A549 (cell line): ENCODE measurements at regions of chr2 and their contacts with region 1.

Region 1: GRCh38 chr2:233443468-233444183 is 89.3 kb downstream of the DGKD start:
- DNase-seq: peak; percentile 88
- ATAC-seq: peak; percentile 55 to 61; a peak in 5 of 6 replicates
- H3K4me3 ChIP-seq: no peak overlapping the region
- H3K27ac ChIP-seq: peak overlapping the region; percentile 84 to 94
- H3K4me1 ChIP-seq: peaks cover 63% of the 10 kb centered on the region
- CTCF ChIP-seq: peak; percentile 89
- EP300 ChIP-seq: no peak
- POLR2A ChIP-seq: no peak
- RAD21 ChIP-seq: peak; percentile 92 to 95

Region 2: GRCh38 chr2:233178994-233179847 is 264.4 kb before region 1 on chr2:
- CTCF ChIA-PET with region 1: no interaction called
- POLR2A ChIA-PET with region 1: no interaction called
- DNase-seq: no peak
- ATAC-seq: peak; percentile 40 to 48; a peak in 4 of 6 replicates
- H3K4me3 ChIP-seq: no peak overlapping the region
- H3K27ac ChIP-seq: 0 out of 6 replicates have a peak overlapping the region, but pooled peaks of 1 of the 2 experiments have one; percentile 14
- H3K4me1 ChIP-seq: no peaks in the 10 kb centered on the region
- CTCF ChIP-seq: no peak
- EP300 ChIP-seq: no peak
- POLR2A ChIP-seq: no peak
- RAD21 ChIP-seq: no peak

Region 3: DNA sequence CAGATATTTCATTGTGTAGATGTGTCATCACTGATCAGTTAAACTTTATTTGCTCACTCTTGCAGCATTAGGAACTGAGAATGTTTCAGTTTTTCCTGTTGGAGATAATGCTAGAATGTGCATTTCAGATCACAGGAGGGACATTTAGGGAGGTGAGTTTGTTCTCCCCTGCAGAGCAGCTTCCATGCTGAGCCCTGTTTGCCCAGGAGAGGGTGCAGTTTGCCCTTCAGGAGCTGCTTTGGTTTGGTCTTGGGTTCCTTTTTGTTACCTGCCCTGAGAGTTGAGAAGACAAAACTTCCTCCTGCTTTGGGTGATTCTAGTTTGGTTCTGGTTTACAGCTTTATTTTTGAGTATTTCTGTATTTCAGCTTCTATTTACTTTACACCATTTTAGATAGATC is 39.4 kb before region 1 on chr2:
- CTCF ChIA-PET with region 1: interaction called, 166 read pairs
- POLR2A ChIA-PET with region 1: no interaction called
- DNase-seq: peak; percentile 60 to 77
- ATAC-seq: peak; percentile 45 to 71; a peak in 3 of 6 replicates
- H3K4me3 ChIP-seq: no peak overlapping the region
- H3K27ac ChIP-seq: peak overlapping the region; percentile 64 to 82
- H3K4me1 ChIP-seq: peaks cover 74% of the 10 kb centered on the region
- CTCF ChIP-seq: peak; percentile 76
- EP300 ChIP-seq: no peak
- POLR2A ChIP-seq: no peak
- RAD21 ChIP-seq: peak; percentile 80 to 88

Region 4: DNA sequence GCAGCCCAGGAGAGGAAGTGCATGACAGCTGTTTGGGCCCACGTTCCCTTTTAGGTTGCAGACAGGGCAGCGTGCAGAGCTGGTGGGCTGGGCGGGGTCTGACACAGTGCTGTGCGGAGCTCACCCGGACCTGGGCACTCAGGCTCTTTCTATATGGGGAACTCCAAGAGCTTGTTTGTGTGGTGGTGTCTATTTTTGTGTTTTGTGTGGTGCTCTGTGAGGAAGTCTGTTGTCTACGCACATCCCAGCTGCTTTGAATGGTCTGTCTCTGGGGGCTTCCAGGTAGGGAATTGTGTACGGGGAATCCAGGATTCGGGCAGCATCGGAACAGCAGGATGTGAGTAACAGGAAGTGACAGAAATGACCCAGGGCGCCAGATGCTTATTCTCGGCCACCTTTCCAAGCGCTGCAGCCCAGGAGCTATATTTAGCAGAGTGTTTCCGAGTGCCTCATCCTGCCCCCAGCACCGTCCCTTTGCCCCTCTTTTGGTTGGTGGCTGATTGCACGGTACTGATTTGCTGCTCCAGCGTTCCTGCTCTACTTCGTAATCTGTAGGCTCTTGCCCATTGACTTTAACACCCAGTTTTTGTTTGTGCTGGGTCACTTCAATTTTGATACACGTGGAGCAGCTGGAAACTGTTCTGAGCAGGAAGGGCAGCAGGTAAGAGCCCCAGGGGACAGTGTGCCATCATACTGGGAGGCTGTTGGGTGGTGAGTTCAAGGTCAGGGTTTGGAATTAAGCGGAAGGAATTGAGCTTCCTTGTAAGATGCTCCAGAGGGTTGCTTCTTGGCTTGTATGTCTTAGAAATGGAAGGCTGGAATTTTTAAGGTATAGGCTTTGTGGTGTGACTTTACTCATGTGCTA is 24.6 kb before region 1 on chr2:
- CTCF ChIA-PET with region 1: interaction called, 356 read pairs
- POLR2A ChIA-PET with region 1: interaction called, 3 read pairs
- DNase-seq: peak; percentile 47 to 81
- ATAC-seq: peak; percentile 32 to 47; a peak in 5 of 6 replicates
- H3K4me3 ChIP-seq: peak overlapping the region; percentile 47
- H3K27ac ChIP-seq: peak overlapping the region; percentile 95 to 99
- H3K4me1 ChIP-seq: peaks cover 100% of the 10 kb centered on the region
- CTCF ChIP-seq: no peak
- EP300 ChIP-seq: peak in 1 of 2 experiments; percentile 19; a peak in 1 of 5 replicates
- POLR2A ChIP-seq: peak; percentile 22; the same call in 1 of the 2 replicates
- RAD21 ChIP-seq: no peak

Region 5: GRCh38 chr2:233455006-233455405 is 11.4 kb after region 1 on chr2:
- CTCF ChIA-PET with region 1: interaction called, 22 read pairs
- POLR2A ChIA-PET with region 1: no interaction called
- DNase-seq: no peak
- ATAC-seq: no peak
- H3K4me3 ChIP-seq: no peak overlapping the region
- H3K27ac ChIP-seq: peak overlapping the region; percentile 26 to 94; a peak in 5 of 6 replicates
- H3K4me1 ChIP-seq: peaks cover 68% of the 10 kb centered on the region
- CTCF ChIP-seq: no peak
- EP300 ChIP-seq: no peak
- POLR2A ChIP-seq: no peak
- RAD21 ChIP-seq: no peak

Region 6: GRCh38 chr2:233711312-233712008 is 267.8 kb after region 1 on chr2:
- CTCF ChIA-PET with region 1: interaction called, 16 read pairs
- POLR2A ChIA-PET with region 1: no interaction called
- DNase-seq: peak; percentile 54 to 90
- ATAC-seq: peak; percentile 83 to 89
- H3K4me3 ChIP-seq: no peak overlapping the region
- H3K27ac ChIP-seq: peak overlapping the region; percentile 98 to 100
- H3K4me1 ChIP-seq: peaks cover 52% of the 10 kb centered on the region
- CTCF ChIP-seq: peak; percentile 84
- EP300 ChIP-seq: no peak
- POLR2A ChIP-seq: no peak
- RAD21 ChIP-seq: peak; percentile 92 to 95